HEK293T (cell line): ENCODE measurements at regions of chr7 and their contacts with region 1.

Region 1: DNA sequence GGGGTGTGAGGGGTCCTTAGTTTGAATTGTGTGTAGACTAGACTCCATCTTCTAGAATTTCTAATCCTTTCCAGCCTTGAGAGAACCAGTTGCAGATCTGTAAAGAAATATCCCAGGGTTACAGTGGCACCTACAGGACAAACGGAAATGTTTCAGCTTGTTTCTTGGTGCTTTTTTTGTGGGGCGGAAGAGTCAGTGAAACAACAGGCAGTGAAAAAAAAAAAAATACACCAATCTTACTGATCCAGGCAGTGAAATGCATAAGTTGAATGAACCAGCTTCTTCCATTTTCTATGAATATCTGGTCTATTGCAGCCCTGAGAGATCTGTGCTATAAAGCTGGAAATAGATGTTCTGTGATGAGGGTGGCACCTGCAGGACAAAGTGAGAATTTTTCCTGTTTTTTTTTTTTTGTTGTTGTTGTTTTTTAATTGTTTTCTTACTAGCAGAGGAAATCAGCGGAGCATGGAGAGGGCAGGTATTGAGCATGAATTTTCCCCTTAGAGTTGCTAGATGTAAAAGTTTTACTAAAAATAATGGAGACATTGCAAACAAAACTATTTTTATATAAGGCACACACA is 81.9 kb upstream of the DYNC1I1 start:
- DNase-seq: peak; percentile 20

Region 2: DNA sequence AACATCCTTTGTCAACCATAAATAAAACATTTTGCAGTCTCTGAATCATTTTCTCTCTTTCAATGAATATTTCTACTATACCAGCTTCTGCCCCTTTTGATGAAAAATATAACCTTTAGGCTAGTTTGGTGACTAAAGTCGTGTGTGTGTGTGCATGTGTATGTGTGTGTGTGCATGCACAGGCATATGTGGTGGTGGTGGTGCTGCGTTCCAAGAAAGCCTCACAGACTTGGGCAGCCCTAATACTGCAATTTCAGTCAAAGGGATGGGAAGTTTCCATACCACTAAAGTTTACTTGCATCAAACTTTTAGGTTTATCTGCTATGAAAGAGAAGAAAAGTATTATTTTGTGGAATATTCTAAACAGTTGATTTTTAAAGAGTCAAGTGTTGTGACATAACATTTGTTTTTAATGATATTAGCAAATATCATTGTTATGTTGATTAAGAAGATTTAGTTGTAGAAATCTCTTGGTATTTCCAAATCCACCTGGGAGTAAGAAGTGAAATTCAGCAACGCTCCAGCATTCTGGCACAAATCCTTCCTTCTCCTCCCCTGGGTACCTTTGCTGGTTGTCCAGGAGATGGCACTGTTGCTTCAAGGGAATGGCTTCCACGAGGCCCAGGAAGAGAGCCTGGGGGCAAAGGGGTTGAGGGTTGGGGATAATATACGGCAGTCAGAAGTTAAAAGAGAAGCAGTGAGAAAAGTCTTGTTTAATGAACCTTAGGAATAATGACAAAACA is 163.3 kb before region 1 on chr7:
- CTCF ChIA-PET with region 1: interaction called, 46 read pairs
- POLR2A ChIA-PET with region 1: no interaction called
- DNase-seq: peak; percentile 80

Region 3: GRCh38 chr7:95545078-95545498 is 145.4 kb before region 1 on chr7:
- CTCF ChIA-PET with region 1: interaction called, 12 read pairs
- POLR2A ChIA-PET with region 1: no interaction called
- DNase-seq: peak; percentile 45